ENCODE measurements at regions of chr12 and their contacts with region 1.

Region 1: GRCh38 chr12:6965026-6965661 is 5.3 kb downstream of the PHB2 start:
- DNase-seq: no peak
- H3K4me3 ChIP-seq: no peak overlapping the region
- H3K27ac ChIP-seq: peak overlapping the region; percentile 70 to 84 (median 75)
- H3K4me1 ChIP-seq: peaks cover 48 to 71% (median 63%) of the 10 kb centered on the region in 4 donors
- H3K27me3 ChIP-seq: no peaks in the 10 kb centered on the region
- CTCF ChIP-seq: peak; percentile 87 to 94 (median 93)
- EP300 ChIP-seq: no peak
- POLR2A ChIP-seq: no peak

Region 2: DNA sequence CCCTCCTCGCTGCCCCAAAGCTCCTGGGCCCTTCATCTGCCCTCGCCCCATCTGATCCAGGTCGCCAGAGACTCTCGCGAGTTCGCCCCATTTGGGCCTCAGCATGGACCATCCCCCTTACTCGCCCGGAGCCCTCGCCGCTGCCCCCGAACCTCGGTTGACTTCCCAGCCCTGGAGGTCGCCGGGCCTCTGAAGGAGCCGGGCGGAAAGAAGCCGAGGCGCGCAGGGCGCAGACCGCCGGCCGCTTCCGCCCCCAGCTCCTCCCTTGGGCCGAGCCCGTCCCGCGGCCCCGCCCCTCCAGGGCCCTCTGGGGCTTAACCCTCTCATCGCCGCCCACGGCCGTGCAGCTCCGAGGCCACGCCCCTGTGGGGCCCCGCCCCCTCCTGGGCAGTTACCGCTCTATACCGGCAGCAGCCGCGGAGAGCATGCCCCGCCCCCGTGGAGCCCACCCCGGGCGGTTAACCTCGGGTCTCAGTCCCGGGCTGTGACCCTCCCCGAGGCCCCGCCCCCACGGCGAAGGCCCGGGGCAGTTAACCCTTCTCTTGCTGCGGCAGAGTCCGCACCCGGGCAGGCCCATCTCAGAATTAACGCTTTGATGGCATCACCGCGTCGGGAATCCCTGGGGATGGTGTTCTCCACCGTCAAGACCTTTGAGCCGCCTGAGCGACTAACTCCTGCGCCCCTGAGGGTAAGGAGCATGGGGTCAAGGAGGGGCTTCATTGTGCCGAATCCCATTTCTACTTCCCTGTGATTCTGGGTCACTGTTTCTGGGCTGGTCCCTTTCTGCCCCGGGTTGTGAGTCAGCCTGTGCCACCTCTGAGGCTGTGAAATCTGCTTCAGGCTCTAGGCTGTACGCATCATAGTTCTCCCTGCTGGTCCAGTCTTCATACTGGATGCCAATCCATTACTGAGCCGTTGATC is 91.8 kb before region 1 on chr12 and contains the start of gene SPSB2:
- intact Hi-C with region 1: loop called (anchors 5 kb)
- DNase-seq: peak; percentile 99
- H3K4me3 ChIP-seq: peak within 1 kb of the TSS; percentile 65 to 88 (median 70)
- H3K27ac ChIP-seq: peak within 1 kb of the TSS; percentile 86 to 89 (median 88)
- H3K4me1 ChIP-seq: peaks cover 37 to 61% (median 51%) of the 10 kb centered on the region in 4 donors
- H3K27me3 ChIP-seq: no peaks in the 10 kb centered on the region
- CTCF ChIP-seq: peak in 2 of 3 experiments; percentile 10 to 37
- EP300 ChIP-seq: no peak
- POLR2A ChIP-seq: peak; percentile 74
- total RNA-seq, gene SPSB2: 4.2 to 10.8 (median 8.5) TPM

Region 3: GRCh38 chr12:6923851-6924250 is 41.3 kb before region 1 on chr12:
- intact Hi-C with region 1: loop called (anchors 1 kb)
- DNase-seq: no peak
- H3K4me3 ChIP-seq: peak overlapping the region in 1 of 4 donors; percentile 89
- H3K27ac ChIP-seq: peak overlapping the region; percentile 95 to 99 (median 98)
- H3K4me1 ChIP-seq: peaks cover 34 to 40% (median 38%) of the 10 kb centered on the region in 4 donors
- H3K27me3 ChIP-seq: no peaks in the 10 kb centered on the region
- CTCF ChIP-seq: no peak
- EP300 ChIP-seq: no peak
- POLR2A ChIP-seq: no peak

Region 4: GRCh38 chr12:7018350-7019042 is 53.4 kb after region 1 on chr12 and contains the start of gene LPCAT3:
- intact Hi-C with region 1: loop called (anchors 5 kb)
- DNase-seq: peak; percentile 99
- H3K4me3 ChIP-seq: peak within 1 kb of the TSS; percentile 77 to 89 (median 86)
- H3K27ac ChIP-seq: peak within 1 kb of the TSS; percentile 88 to 97 (median 88)
- H3K4me1 ChIP-seq: peaks cover 24 to 36% (median 31%) of the 10 kb centered on the region in 4 donors
- H3K27me3 ChIP-seq: no peaks in the 10 kb centered on the region
- CTCF ChIP-seq: peak; percentile 84 to 93 (median 85)
- EP300 ChIP-seq: no peak
- POLR2A ChIP-seq: peak; percentile 82
- total RNA-seq, gene LPCAT3: 21.6 to 33.3 (median 26.2) TPM